PC-9 (cell line): ENCODE measurements at regions of chr20 and their contacts with region 1.

Region 1: DNA sequence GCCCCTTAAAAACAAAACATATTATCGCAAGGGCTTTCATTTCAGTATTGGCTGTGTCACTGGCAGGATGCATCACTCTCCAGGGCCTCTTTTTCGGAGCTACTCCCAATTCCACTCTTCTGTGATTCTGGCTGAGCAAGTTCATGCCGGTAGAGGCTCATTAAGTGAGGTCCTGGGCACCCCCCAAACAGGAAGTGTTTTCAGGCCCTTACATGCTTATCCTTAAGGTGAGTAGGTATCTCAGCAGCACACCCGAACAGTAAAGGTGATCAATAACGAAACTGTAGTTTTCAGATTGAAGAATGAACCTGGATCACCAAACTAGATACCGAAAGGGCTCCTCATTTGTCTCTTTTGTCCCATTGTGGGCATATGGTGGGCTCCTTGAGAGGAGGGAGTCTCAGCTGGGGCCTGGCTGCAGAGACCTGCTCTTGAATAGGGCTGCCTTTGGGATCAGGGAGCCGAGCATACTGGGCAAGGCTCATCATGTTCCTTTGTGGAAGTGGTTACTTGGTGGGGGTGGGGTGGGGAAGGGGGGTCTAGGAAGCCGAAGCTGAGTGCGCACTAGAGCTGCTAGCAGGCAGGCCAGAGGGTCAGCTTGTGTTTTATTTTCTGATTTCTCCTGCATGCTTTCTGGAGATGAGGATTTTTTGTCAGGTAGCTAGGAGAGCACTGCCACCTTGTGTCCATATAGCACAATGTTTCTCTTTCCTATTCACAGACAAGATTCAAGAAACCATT is 65.2 kb downstream of the CDS2 start:
- DNase-seq: peak; percentile 39 to 62
- H3K4me3 ChIP-seq: no peak overlapping the region
- H3K27ac ChIP-seq: no peak overlapping the region
- H3K4me1 ChIP-seq: no peaks in the 10 kb centered on the region
- H3K27me3 ChIP-seq: no peaks in the 10 kb centered on the region
- CTCF ChIP-seq: peak; percentile 87

Region 2: GRCh38 chr20:4607287-4607713 is 584.7 kb before region 1 on chr20:
- CTCF ChIA-PET with region 1: no interaction called
- POLR2A ChIA-PET with region 1: no interaction called
- intact Hi-C with region 1: loop called (anchors 10 kb)
- DNase-seq: peak; percentile 49 to 57
- H3K4me3 ChIP-seq: no peak overlapping the region
- H3K27ac ChIP-seq: no peak overlapping the region
- H3K4me1 ChIP-seq: peaks cover 7% of the 10 kb centered on the region
- H3K27me3 ChIP-seq: no peaks in the 10 kb centered on the region
- CTCF ChIP-seq: peak; percentile 97